Activated CD4-positive, alpha-beta T cell treated with anti-CD3 and anti-CD28 coated beads, Interleukin-2, amount 10 ng/mL, durations not matched to agents 7 days and 5 days (primary cell): ENCODE measurements at regions of chr2 and their contacts with region 1.

Region 1: GRCh38 chr2:96856776-96857673 is 791 bp downstream of the ANKRD39 start:
- DNase-seq: peak; percentile 56
- H3K4me3 Mint-ChIP-seq: peak overlapping the region; percentile 84
- H3K27ac Mint-ChIP-seq: peak overlapping the region; percentile 88
- H3K4me1 Mint-ChIP-seq: peaks cover 43% of the 10 kb centered on the region
- H3K27me3 Mint-ChIP-seq: no peaks in the 10 kb centered on the region

Region 2: DNA sequence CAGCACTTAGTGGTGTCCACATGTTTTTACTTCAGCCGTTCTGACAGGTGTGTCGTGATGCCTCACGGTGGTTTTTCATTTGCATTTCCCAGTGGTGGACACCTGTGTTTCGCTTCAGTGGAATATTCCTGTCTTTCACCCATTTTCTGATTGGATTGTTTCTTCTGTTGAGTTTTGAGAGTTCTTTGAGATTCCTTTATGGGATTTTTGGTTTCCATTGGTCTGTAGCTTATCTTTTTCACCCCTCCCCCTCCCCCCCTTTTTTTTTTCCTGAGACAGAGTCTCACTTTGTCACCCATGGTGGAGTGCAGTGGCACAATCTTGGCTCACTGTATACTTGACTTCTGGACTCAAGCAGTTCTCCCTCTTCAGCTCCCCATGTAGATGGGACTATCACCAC is 21.2 kb before region 1 on chr2:
- CTCF ChIA-PET with region 1: interaction called, 13 read pairs
- POLR2A ChIA-PET with region 1: no interaction called
- DNase-seq: no peak
- H3K4me3 Mint-ChIP-seq: no peak overlapping the region
- H3K27ac Mint-ChIP-seq: no peak overlapping the region
- H3K4me1 Mint-ChIP-seq: peaks cover 21% of the 10 kb centered on the region
- H3K27me3 Mint-ChIP-seq: no peaks in the 10 kb centered on the region

Region 3: GRCh38 chr2:96868555-96869280 is 11.7 kb after region 1 on chr2:
- CTCF ChIA-PET with region 1: interaction called, 39 read pairs
- POLR2A ChIA-PET with region 1: no interaction called
- DNase-seq: peak; percentile 70
- H3K4me3 Mint-ChIP-seq: peak overlapping the region; percentile 79
- H3K27ac Mint-ChIP-seq: peak overlapping the region; percentile 85
- H3K4me1 Mint-ChIP-seq: peaks cover 38% of the 10 kb centered on the region
- H3K27me3 Mint-ChIP-seq: peaks cover 10% of the 10 kb centered on the region

Region 4: GRCh38 chr2:96945012-96945804 is 88.2 kb after region 1 on chr2:
- CTCF ChIA-PET with region 1: interaction called, 26 read pairs
- POLR2A ChIA-PET with region 1: no interaction called
- DNase-seq: no peak
- H3K4me3 Mint-ChIP-seq: no peak overlapping the region
- H3K27ac Mint-ChIP-seq: no peak overlapping the region
- H3K4me1 Mint-ChIP-seq: peaks cover 36% of the 10 kb centered on the region
- H3K27me3 Mint-ChIP-seq: peaks cover 3% of the 10 kb centered on the region

Region 5: GRCh38 chr2:96960153-96960961 is 103.3 kb after region 1 on chr2:
- CTCF ChIA-PET with region 1: interaction called, 36 read pairs
- POLR2A ChIA-PET with region 1: interaction called, 6 read pairs
- DNase-seq: peak; percentile 88
- H3K4me3 Mint-ChIP-seq: peak overlapping the region; percentile 15
- H3K27ac Mint-ChIP-seq: peak overlapping the region; percentile 97
- H3K4me1 Mint-ChIP-seq: peaks cover 64% of the 10 kb centered on the region
- H3K27me3 Mint-ChIP-seq: no peaks in the 10 kb centered on the region